Head of caudate nucleus (tissue), 42 donors: ENCODE measurements at regions of chr12 and their contacts with region 1.

Region 1: GRCh38 chr12:10562306-10562933 is 51.0 kb downstream of the MAGOHB start:
- DNase-seq: peak in 13 of 42 donors; percentile 11 to 77 (median 34)

Region 2: DNA sequence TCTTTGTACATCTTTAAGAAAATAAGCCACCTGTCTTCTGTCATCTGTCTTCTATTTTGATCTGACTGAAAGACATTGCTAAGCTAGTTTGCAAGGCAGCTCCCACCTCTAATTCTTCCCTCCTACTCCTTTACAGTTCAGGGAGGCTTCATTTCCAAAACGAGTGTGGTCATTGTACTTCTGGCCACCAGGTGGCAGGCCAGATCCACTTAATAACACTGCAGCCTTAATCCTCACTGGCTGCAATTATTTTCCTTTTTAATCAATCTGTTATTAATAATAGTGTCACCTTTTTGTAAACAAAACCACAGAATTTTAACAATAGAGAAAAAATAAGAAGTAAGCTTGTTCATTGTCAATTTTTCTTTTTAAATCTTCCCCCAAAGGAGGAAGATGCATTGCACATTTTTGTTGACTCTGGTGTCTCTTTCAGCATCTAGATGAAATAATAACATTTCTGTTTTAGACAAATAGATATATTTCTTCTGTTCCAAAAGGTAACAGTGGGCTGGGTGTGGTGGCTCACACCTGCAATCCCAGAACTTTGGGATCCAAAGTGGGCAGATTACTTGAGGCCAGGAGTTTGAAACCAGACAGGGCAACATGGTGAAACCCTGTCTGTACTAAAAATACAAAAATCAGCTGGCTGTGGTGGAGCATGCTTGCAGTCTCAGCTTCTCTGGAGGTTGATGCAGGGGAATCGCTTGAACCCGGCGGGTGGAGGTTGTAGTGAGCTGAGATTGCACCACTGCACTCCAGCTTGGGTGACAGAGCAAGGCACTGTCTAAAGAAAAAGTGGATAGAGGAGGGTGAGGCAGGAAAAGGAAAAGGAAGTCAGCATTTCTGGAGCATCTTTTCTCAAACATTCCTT is 326.4 kb before region 1 on chr12:
- intact Hi-C with region 1: loop called (anchors 10 kb)
- DNase-seq: peak in 40 of 42 donors; percentile 22 to 85 (median 60)

Region 3: DNA sequence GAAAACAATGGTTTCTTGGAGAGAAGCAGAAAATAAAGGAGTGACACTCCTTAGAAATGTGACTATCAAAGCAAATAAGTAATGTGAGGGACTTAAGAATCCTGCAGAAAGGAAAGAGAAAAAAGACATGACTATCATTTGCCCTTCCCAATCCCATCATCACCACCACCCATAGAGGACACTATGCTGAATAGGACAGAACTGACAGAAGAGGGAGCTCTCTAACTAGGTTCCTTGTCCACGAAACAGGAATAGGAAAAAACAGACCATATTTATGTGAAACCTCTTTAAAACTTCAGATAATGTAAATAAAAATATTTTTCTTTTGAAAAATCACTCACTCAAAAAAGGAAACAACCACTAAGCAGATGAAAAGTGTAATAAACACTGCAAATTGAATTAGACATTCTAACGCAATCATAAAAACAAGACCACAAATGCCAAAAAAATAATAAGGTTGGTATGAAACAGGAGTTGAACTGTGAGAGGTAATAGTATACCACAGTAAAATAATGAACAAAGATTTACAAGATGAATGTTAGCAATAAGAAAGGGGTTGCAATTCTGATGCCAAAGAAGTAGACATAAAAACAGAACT is 230.7 kb before region 1 on chr12:
- intact Hi-C with region 1: loop called (anchors 5 kb)
- DNase-seq: peak in 12 of 42 donors; percentile 4 to 70 (median 34)

Region 4: DNA sequence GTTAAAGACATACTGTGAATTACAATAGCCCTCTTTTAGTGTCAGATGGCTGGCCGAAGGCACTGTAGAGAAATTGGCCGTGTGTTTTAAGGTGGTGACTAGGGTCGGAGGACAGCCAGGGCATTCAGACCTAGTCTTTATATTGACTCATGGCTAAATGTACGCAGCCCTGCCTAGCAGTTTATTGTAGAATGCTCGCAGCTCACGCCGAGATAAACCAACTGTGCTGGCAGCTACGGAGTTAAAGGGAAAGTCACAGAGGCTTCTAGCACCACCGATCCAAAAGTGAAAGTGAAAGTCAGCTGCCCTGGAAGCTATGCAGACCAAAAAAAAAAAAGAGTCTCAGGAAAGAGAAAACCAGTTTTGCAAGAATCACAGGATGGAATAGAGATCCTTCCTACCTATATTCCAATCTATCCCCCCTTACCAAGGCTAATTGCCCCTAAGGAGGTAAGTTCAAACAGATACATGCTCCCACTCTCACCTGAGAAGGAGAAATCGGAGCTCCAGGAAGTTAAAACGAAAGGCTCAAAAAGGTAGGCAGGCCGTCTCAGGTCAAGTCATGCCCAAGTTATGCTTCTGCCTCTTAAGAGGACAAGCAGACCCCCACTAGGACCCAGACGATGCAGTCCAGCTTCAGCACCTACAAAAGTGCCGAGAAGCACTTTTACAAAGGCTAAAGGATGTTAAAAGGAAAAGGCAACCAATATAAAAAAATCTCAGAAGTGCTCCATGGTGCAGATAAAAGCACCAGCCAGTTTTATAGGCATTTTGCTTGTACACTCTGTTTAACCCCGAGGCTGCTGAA is 197.4 kb before region 1 on chr12:
- intact Hi-C with region 1: loop called (anchors 10 kb)
- DNase-seq: peak in 40 of 42 donors; percentile 30 to 88 (median 65)